CD14-positive monocyte (primary cell): ENCODE measurements at regions of chr2 and their contacts with region 1.

Region 1: GRCh38 chr2:217193431-217194340 is 333.8 kb upstream of the TNP1 start:
- DNase-seq: no peak
- H3K4me3 ChIP-seq: no peak overlapping the region
- H3K4me3 Mint-ChIP-seq: peak overlapping the region in 1 of 2 donors; percentile 2
- H3K27ac ChIP-seq: no peak overlapping the region
- H3K27ac Mint-ChIP-seq: no peak overlapping the region
- H3K4me1 ChIP-seq: no peaks in the 10 kb centered on the region
- H3K4me1 Mint-ChIP-seq: no peaks in the 10 kb centered on the region
- H3K27me3 ChIP-seq: peaks cover 61 to 75% of the 10 kb centered on the region in 2 donors
- H3K27me3 Mint-ChIP-seq: peaks cover 36 to 69% (median 41%) of the 10 kb centered on the region in 3 donors
- CTCF ChIP-seq: no peak

Region 2: DNA sequence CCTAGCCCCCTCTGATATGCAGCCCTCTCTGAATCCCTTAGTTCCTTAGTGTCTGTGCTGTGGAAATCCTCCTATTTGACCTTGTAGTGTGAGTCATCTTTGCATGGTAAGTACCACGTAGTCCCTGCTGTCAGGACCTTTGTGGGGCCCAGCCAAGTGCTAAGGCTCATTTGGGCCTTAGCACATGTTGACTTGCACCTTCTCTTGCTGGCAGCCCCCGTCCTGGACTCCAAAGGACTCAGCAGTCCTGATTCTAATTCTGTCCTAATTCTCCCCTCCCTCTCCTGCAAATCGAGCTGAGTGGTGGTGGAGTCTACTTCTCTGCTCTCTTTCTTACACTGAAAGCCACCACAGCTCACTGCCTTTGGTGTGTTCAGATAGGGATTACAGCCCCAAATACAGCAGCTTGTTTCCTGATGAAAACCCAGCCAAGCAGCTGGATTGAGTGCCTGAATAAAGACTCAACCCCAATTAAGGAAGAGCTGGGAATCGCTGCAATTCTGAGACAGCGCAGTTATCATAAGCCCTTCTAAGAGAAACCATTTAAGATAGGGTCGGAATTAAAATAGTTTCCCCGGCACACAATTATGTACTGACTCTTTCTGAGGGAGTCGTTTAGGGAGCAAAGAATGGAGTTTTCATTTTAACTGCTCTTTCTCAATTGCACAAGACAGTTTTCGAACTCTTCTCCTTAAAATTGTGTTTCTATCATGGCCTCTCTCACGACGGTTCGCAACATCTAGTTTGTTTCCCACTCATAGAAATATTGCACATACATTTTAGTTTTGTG is 118.2 kb before region 1 on chr2:
- intact Hi-C with region 1: no loop called
- DNase-seq: peak in 2 of 3 donors; percentile 13 to 34
- H3K4me3 ChIP-seq: no peak overlapping the region
- H3K4me3 Mint-ChIP-seq: peak overlapping the region in 1 of 2 donors; percentile 16
- H3K27ac ChIP-seq: no peak overlapping the region
- H3K27ac Mint-ChIP-seq: peak overlapping the region in 3 of 7 donors; percentile 27 to 56 (median 30)
- H3K4me1 ChIP-seq: peaks cover 11 to 12% of the 10 kb centered on the region in 2 donors
- H3K4me1 Mint-ChIP-seq: peaks cover 24% of the 10 kb centered on the region
- H3K27me3 ChIP-seq: no peaks in the 10 kb centered on the region
- H3K27me3 Mint-ChIP-seq: peaks cover 2 to 7% (median 5%) of the 10 kb centered on the region in 3 donors
- CTCF ChIP-seq: no peak

Region 3: GRCh38 chr2:217162533-217162932 is 31.2 kb before region 1 on chr2:
- intact Hi-C with region 1: no loop called
- DNase-seq: peak in 2 of 3 donors; percentile 14 to 47
- H3K4me3 ChIP-seq: no peak overlapping the region
- H3K4me3 Mint-ChIP-seq: peak overlapping the region in 1 of 2 donors; percentile 84
- H3K27ac ChIP-seq: no peak overlapping the region
- H3K27ac Mint-ChIP-seq: no peak overlapping the region
- H3K4me1 ChIP-seq: peaks cover 7 to 10% of the 10 kb centered on the region in 2 donors
- H3K4me1 Mint-ChIP-seq: peaks cover 16% of the 10 kb centered on the region
- H3K27me3 ChIP-seq: peaks cover 97% of the 10 kb centered on the region in 2 donors
- H3K27me3 Mint-ChIP-seq: peaks cover 52 to 86% (median 79%) of the 10 kb centered on the region in 3 donors
- CTCF ChIP-seq: no peak

Region 4: DNA sequence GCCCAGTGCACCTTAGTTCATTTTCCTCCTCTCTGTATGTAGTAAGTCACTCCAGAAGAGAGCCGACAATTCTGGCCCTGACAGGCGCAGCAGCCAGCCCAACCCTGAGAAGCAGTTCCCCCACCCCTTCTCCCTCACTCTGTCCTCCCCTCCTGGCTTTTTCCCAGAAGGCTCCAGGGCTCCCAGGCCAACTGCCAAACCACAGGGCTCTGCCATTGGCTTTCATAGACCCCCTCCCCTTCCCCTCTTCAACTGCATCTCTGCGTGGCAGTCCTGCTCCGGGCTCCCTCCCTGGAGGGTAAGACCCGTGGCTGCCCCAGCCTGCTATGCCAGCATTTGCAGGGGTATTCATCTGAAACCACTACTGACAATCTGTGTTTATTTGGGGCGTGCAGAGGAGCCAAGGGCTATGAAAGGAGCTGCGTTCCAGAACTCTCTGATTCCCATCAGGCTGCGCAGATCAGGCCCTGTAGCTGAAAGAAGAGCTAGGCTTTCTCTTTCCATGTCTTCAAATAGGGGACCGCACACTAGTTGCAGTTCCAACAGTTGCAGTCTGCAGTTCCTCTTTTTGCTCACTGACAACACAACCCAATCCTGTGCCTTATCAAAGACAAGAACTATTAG is 54.7 kb after region 1 on chr2:
- intact Hi-C with region 1: loop called in 1 of 2 experiments (anchors 10 kb)
- DNase-seq: peak; percentile 33 to 58 (median 55)
- H3K4me3 ChIP-seq: peak overlapping the region in 1 of 3 experiments; percentile 39
- H3K4me3 Mint-ChIP-seq: no peak overlapping the region
- H3K27ac ChIP-seq: no peak overlapping the region
- H3K27ac Mint-ChIP-seq: no peak overlapping the region
- H3K4me1 ChIP-seq: peaks cover 7 to 9% of the 10 kb centered on the region in 2 donors
- H3K4me1 Mint-ChIP-seq: no peaks in the 10 kb centered on the region
- H3K27me3 ChIP-seq: peaks cover 39 to 73% of the 10 kb centered on the region in 2 donors
- H3K27me3 Mint-ChIP-seq: peaks cover 21 to 25% (median 24%) of the 10 kb centered on the region in 3 donors
- CTCF ChIP-seq: no peak